A549 (cell line): ENCODE measurements at regions of chr15 and their contacts with region 1.

Region 1: DNA sequence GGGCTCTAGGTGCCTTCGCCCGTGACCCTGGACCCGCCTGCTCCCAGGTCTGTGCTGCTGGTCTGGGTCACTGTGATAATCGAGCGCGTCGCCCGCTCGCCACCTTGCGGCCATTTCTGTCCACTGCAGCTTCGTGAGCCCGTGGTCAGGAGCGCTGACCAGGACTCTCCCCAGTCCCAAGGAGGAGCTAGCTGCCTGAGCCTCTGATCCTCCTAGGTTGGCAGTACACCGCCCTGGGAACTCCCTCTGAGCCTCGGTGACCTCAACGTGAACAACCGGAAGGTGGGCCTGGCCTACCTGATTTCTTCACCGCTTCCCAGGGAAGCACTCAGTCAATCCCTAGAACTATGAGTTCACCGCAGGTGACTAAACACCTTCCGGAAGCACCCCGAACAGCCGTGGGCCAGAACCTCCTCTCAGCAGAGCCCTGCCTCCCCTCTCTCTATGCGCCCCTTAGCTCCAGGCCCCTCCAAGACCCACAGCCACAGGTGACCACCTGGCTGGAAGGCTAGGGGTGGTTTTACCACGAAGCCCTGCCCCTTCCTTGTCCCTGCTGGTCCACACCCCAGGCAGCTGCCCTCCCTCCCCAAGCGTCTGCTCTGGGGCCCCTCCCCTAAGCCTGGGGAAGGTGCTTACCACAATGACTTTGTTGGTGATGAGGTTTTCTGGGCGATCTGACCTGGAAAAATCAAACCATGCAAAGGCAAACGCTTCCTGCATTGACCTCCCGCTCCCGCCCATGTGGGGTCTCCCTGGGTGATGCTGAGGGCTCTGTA is 9.7 kb downstream of the PLA2G4D start:
- DNase-seq: peak; percentile 52 to 66
- ATAC-seq: peak; percentile 86 to 96
- H3K4me3 ChIP-seq: no peak overlapping the region
- H3K27ac ChIP-seq: 0 out of 6 replicates have a peak overlapping the region, but pooled peaks of 1 of the 2 experiments have one; percentile 28
- H3K4me1 ChIP-seq: no peaks in the 10 kb centered on the region
- CTCF ChIP-seq: peak; percentile 67
- EP300 ChIP-seq: no peak
- POLR2A ChIP-seq: no peak
- RAD21 ChIP-seq: peak; percentile 64 to 78

Region 2: DNA sequence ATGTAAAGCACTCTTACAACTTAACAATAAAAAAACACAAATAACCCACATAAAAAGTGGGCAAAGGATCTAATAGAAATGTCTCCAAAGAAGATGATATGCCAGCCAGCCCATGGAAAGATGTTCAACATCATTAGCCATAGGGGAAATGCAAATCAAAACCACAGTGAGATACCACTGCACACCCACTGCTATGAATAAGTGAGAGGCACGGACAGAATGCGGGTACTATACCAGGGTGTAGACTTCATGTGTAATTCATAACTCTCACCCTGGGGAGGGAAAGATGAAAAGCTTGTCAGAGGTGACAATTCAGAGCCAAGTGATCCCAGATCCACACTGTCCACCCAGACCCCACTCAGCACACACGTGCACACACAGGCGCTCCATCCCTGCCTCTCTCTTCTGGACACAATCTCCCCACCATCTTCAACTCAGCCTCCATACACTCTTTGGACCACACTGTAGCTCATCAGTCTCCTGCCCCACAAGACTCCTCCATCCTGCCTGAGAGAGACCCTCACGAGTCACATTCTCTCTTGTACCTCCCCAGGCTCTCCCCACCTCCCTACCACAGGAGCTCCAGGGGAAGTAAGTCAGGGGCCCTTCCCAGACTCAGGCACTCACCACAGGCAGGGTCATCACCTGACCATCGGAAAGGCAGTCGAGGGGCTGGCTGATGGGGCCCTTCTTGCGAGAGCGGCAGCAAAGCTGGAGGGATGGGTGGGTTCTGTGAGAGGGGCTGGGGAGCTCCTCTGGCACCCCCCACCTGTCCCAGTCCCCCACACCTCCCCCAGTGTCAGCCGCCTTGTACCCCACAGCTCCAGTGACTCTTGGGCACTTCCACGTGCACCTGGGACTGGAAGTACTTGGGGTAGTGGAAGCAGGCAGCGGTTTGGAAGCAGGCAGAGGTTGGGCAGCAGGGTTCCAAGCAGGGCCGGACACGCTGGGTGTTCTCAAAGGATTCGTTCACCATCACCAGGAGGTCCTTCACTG is 85.1 kb before region 1 on chr15:
- CTCF ChIA-PET with region 1: interaction called, 247 read pairs
- POLR2A ChIA-PET with region 1: no interaction called
- DNase-seq: no peak
- ATAC-seq: no peak
- H3K4me3 ChIP-seq: no peak overlapping the region
- H3K27ac ChIP-seq: no peak overlapping the region
- H3K4me1 ChIP-seq: no peaks in the 10 kb centered on the region
- CTCF ChIP-seq: no peak
- EP300 ChIP-seq: no peak
- POLR2A ChIP-seq: no peak
- RAD21 ChIP-seq: no peak

Region 3: GRCh38 chr15:42007386-42007785 is 77.3 kb before region 1 on chr15:
- CTCF ChIA-PET with region 1: interaction called, 15 read pairs
- POLR2A ChIA-PET with region 1: no interaction called
- DNase-seq: no peak
- ATAC-seq: no peak
- H3K4me3 ChIP-seq: no peak overlapping the region
- H3K27ac ChIP-seq: no peak overlapping the region
- H3K4me1 ChIP-seq: 0 out of 3 replicates have a peak, but pooled peaks cover 4% of the 10 kb centered on the region
- CTCF ChIP-seq: no peak
- EP300 ChIP-seq: no peak
- POLR2A ChIP-seq: no peak
- RAD21 ChIP-seq: no peak

Region 4: GRCh38 chr15:42056934-42057779 is 27.5 kb before region 1 on chr15:
- CTCF ChIA-PET with region 1: interaction called, 32 read pairs
- POLR2A ChIA-PET with region 1: no interaction called
- DNase-seq: peak; percentile 88 to 94
- ATAC-seq: peak; percentile 94 to 96
- H3K4me3 ChIP-seq: peak overlapping the region; percentile 39
- H3K27ac ChIP-seq: peak overlapping the region; percentile 70 to 85
- H3K4me1 ChIP-seq: peaks cover 10% of the 10 kb centered on the region; the same call in 2 of the 3 replicates
- CTCF ChIP-seq: peak; percentile 60
- EP300 ChIP-seq: peak; percentile 20 to 44; a peak in 2 of 5 replicates
- POLR2A ChIP-seq: no peak
- RAD21 ChIP-seq: peak; percentile 54 to 69

Region 5: DNA sequence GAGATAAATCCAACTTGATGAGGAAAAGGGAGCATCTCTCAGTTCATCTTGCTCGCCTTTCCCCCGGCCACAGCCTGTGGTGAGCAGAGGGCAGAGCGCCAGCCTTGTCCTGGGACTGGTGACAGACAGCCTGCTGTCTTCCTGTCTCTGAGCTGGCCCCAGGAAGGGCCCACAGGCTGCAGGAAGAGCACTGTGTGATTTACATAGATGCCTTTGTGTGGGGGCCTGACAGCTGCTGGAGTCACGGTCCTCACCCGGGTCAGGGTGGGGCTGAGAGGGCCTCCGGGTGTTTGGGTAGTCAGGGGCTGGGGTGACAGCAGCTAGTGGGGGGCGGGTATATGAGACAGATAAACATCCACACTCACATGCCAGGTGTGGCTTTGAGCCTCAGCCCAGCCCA is 19.6 kb before region 1 on chr15:
- CTCF ChIA-PET with region 1: interaction called, 67 read pairs
- POLR2A ChIA-PET with region 1: no interaction called
- DNase-seq: no peak
- ATAC-seq: peak in 1 of 2 experiments; percentile 26; a peak in 1 of 6 replicates
- H3K4me3 ChIP-seq: no peak overlapping the region
- H3K27ac ChIP-seq: no peak overlapping the region
- H3K4me1 ChIP-seq: no peaks in the 10 kb centered on the region; the same call in 2 of the 3 replicates
- CTCF ChIP-seq: no peak
- EP300 ChIP-seq: no peak
- POLR2A ChIP-seq: no peak
- RAD21 ChIP-seq: no peak

Region 6: GRCh38 chr15:42102646-42103235 is 18.1 kb after region 1 on chr15:
- CTCF ChIA-PET with region 1: interaction called, 21 read pairs
- POLR2A ChIA-PET with region 1: no interaction called
- DNase-seq: no peak
- ATAC-seq: no peak
- H3K4me3 ChIP-seq: no peak overlapping the region
- H3K27ac ChIP-seq: no peak overlapping the region
- H3K4me1 ChIP-seq: no peaks in the 10 kb centered on the region
- CTCF ChIP-seq: no peak
- EP300 ChIP-seq: no peak
- POLR2A ChIP-seq: no peak
- RAD21 ChIP-seq: no peak

Region 7: GRCh38 chr15:42137431-42138261 is 53.0 kb after region 1 on chr15:
- CTCF ChIA-PET with region 1: interaction called, 37 read pairs
- POLR2A ChIA-PET with region 1: no interaction called
- DNase-seq: peak; percentile 43 to 47
- ATAC-seq: peak; percentile 68 to 77; a peak in 4 of 6 replicates
- H3K4me3 ChIP-seq: no peak overlapping the region
- H3K27ac ChIP-seq: no peak overlapping the region
- H3K4me1 ChIP-seq: peaks cover 25% of the 10 kb centered on the region
- CTCF ChIP-seq: peak; percentile 60
- EP300 ChIP-seq: no peak
- POLR2A ChIP-seq: no peak
- RAD21 ChIP-seq: peak; percentile 60 to 64

Region 8: DNA sequence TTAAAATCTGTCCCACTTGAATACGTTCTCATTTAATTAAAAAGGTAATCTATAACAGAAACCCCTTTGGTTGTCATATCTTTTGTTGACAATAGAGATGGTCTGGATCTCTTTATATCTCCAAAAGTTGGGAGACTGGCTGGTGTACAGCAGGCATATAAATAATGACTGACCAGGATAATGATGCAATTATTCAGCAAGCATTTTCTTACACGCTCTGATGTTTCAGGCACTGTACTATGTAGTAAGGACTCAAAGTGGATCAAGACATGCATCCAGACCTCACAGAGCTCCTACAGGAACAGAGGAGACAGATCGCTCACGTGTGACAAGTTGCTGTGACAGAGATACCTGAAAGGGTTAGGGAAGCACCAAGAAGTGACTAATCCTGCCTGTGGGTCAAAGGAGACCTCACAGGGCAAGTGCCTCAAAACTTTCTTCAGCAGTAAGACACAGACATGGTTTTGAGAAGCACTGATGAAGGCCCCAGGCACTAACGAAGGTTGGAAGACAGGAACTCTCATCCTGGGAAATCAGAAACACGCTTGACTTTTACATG is 97.8 kb after region 1 on chr15:
- CTCF ChIA-PET with region 1: no interaction called
- POLR2A ChIA-PET with region 1: no interaction called
- DNase-seq: no peak
- ATAC-seq: no peak
- H3K4me3 ChIP-seq: no peak overlapping the region
- H3K27ac ChIP-seq: no peak overlapping the region
- H3K4me1 ChIP-seq: no peaks in the 10 kb centered on the region
- CTCF ChIP-seq: no peak
- EP300 ChIP-seq: no peak
- POLR2A ChIP-seq: no peak
- RAD21 ChIP-seq: no peak